AG04449 (cell line): ENCODE measurements at regions of chr5 and their contacts with region 1.

Region 1: GRCh38 chr5:150497274-150497988 is 10.5 kb upstream of the NDST1 start:
- DNase-seq: no peak
- H3K4me3 ChIP-seq: peak overlapping the region; percentile 35
- CTCF ChIP-seq: no peak

Region 2: DNA sequence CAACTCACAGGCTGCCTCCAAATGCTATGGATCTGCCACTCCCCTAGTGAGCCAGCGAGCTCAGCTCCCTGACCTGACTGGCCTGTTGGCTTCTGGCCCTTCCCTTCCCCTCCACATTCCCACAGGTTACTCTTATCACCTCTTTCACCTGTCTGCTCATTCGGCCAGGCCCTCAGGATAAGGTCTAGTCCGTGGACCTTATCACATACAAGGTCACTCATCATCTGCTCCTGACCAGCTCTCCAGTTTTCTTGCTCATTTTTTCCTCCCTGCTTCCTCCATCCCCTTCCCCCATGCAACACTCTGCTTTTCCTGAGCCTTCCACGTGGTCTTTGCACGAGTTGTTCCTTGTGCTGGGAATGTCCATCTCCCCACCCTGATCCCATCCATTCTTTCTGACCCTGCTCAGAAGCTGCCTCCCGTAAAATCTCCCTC is 15.4 kb before region 1 on chr5:
- CTCF ChIA-PET with region 1: interaction called, 13 read pairs
- POLR2A ChIA-PET with region 1: interaction called, 5 read pairs
- DNase-seq: no peak
- H3K4me3 ChIP-seq: no peak overlapping the region
- CTCF ChIP-seq: no peak

Region 3: GRCh38 chr5:150487199-150488061 is 10.0 kb before region 1 on chr5:
- CTCF ChIA-PET with region 1: interaction called, 13 read pairs
- POLR2A ChIA-PET with region 1: interaction called, 14 read pairs
- DNase-seq: no peak
- H3K4me3 ChIP-seq: peak overlapping the region; percentile 87
- CTCF ChIP-seq: peak; percentile 17